Mammary epithelial cell (primary cell): ENCODE measurements at regions of chr1 and their contacts with region 1.

Region 1: GRCh38 chr1:31444725-31445448 is 31.9 kb downstream of the SERINC2 start:
- DNase-seq: no peak
- H3K4me3 ChIP-seq: no peak overlapping the region
- H3K27ac ChIP-seq: no peak overlapping the region
- H3K4me1 ChIP-seq: no peaks in the 10 kb centered on the region
- H3K27me3 ChIP-seq: no peaks in the 10 kb centered on the region
- CTCF ChIP-seq: no peak

Region 2: DNA sequence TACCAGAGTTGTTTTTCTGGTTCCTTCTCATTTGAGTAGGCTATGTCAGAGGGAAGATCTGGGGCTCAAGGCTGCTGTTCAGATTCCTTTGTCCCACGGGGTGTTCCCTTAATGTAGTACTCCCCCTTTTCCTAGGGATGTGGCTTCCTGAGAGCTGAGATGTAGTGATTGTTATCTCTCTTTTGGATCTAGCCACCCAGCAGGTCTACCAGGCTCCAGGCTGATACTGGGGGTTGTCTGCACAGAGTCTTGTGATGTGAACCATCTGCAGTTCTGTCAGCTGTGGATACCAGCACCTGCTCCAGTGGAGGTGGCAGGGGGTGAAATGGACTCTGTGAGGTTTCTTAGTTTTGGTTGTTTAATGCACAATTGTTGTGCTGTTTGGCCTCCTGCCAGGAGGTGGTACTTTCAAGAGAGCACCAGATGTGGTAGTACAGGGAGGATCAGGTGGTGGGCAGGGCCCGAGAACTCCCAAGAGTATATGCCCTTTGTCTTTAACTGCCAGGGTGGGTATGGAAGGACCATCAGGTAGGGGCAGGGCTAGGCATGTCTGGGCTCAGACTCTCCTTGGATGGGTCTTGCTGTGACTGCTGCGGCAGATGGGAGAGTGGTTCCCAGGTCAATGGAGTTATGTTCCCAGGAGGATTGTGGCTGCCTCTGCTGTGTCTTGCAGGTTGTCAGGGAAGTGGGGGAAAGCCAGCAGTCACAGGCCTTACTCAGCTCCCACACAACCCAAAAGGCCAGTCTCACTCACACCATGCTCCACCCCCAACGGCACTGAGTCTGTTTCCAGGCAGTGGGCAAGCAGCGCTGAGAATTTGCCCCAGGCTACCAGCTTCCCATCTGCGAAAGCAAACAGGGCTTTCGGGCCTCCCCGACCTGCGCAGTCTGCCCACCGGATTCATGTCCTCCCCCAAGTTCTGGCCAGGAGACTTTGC is 32.3 kb after region 1 on chr1:
- CTCF ChIA-PET with region 1: no interaction called
- dilution Hi-C with region 1: no loop called
- in situ Hi-C with region 1: no loop called
- intact Hi-C with region 1: no loop called
- DNase-seq: peak; percentile 87
- H3K4me3 ChIP-seq: no peak overlapping the region
- H3K27ac ChIP-seq: peak overlapping the region; percentile 56
- H3K4me1 ChIP-seq: peaks cover 27% of the 10 kb centered on the region
- H3K27me3 ChIP-seq: no peaks in the 10 kb centered on the region
- CTCF ChIP-seq: no peak

Region 3: DNA sequence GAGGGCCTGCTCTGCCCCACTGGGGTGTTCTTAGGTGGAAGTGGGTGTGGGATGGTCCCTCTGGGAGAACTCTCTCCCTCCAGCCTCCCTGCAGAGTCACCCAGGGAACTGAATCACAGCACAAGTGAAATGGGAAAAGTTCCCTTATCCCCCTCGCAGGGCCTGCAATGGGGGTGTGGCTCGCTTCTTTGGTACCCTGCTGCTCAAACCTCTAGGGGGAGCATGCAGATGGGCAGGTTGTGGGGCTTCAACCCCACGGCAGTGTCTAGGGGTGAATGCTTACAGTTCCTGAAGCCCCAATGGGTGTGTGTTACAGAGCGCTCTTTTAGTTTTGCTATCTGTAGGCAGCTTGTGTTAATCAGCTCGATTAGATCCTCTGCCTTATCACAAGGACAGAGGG is 72.4 kb after region 1 on chr1:
- CTCF ChIA-PET with region 1: no interaction called
- dilution Hi-C with region 1: loop called (anchors 5 kb)
- in situ Hi-C with region 1: no loop called
- intact Hi-C with region 1: no loop called
- DNase-seq: no peak
- H3K4me3 ChIP-seq: no peak overlapping the region
- H3K27ac ChIP-seq: no peak overlapping the region
- H3K4me1 ChIP-seq: peaks cover 6% of the 10 kb centered on the region
- H3K27me3 ChIP-seq: no peaks in the 10 kb centered on the region
- CTCF ChIP-seq: no peak

Region 4: DNA sequence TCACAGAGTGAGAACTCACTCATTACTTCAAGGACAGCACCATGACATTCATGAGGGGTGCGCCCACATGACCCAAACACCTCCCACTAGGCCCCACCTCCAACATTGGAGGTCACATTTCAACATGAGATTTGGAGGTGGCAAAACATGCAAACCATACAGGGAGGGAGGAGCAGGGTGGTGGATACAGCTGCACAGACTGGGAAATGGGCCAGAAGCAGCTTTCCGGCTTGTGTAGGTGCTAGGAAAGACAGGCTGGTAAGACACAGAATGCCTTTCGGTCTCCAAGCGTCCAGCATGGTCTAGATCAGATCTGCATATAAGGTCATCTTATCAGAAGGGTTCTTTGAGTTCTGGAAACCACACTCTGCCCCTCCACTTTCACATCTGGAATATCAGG is 96.3 kb after region 1 on chr1:
- CTCF ChIA-PET with region 1: no interaction called
- dilution Hi-C with region 1: loop called (anchors 5 kb)
- in situ Hi-C with region 1: no loop called
- intact Hi-C with region 1: no loop called
- DNase-seq: no peak
- H3K4me3 ChIP-seq: no peak overlapping the region
- H3K27ac ChIP-seq: no peak overlapping the region
- H3K4me1 ChIP-seq: peaks cover 5% of the 10 kb centered on the region
- H3K27me3 ChIP-seq: no peaks in the 10 kb centered on the region
- CTCF ChIP-seq: no peak